ENCODE measurements at regions of chr6 and their contacts with region 1.

Region 1: GRCh38 chr6:29834564-29835436 is 7.2 kb downstream of the HLA-G start:
- DNase-seq: peak; percentile 84
- H3K4me3 Mint-ChIP-seq: no peak overlapping the region
- H3K27ac Mint-ChIP-seq: no peak overlapping the region
- H3K4me1 Mint-ChIP-seq: peaks cover 13% of the 10 kb centered on the region
- H3K27me3 Mint-ChIP-seq: peaks cover 66% of the 10 kb centered on the region

Region 2: DNA sequence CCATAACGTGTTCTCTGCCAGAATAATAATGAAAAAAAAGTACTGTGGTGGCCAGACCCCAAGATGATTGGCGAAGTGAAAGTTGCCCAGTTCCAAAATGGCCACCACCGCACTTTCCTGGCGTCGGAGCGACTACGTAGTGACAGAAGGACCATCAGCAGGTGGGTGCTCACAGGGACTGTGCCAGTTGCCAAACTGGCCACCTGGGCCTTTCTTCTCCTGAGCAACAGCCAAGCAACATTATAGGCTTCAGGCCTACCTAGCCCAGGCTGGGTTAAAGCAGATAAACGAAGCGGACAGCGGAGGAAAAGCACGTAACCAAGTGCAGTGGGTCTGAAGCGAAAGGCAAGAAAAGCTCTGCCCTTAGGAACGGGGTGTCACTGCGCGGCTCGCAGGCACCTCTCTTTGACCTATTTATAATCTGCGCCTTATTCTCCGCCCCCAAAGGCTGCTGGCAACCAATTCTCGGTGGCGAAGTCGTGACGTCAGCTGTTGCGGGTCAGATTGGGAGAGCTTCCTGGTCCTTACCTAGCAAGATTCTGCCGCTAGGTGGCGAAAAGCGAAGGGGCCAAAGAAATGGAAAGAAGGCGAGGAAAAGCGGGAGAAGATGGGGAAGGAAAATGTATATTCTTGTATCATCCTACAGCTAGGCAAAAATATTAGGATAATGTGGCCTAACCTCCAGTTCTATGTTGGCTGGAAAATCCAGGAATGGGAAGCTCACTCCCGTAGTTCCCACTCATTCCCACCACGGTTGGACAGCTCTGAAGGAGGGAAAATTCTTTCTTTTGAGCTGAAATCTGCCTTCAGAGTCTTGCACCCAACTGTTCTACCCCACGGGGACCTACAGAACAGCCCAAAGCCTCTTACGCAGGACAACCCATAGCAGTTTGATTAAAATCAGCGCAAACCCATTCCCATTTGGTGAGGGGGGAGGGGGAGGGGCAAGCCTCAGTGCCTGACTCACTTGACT is 184.8 kb before region 1 on chr6:
- intact Hi-C with region 1: loop called (anchors 5 kb)
- DNase-seq: peak; percentile 99
- H3K4me3 Mint-ChIP-seq: peak overlapping the region; percentile 94
- H3K27ac Mint-ChIP-seq: peak overlapping the region; percentile 99
- H3K4me1 Mint-ChIP-seq: peaks cover 10% of the 10 kb centered on the region
- H3K27me3 Mint-ChIP-seq: peaks cover 5% of the 10 kb centered on the region

Region 3: GRCh38 chr6:29685718-29686326 is 149.0 kb before region 1 on chr6:
- intact Hi-C with region 1: no loop called
- DNase-seq: no peak
- H3K4me3 Mint-ChIP-seq: no peak overlapping the region
- H3K27ac Mint-ChIP-seq: no peak overlapping the region
- H3K4me1 Mint-ChIP-seq: peaks cover 6% of the 10 kb centered on the region
- H3K27me3 Mint-ChIP-seq: peaks cover 20% of the 10 kb centered on the region

Region 4: GRCh38 chr6:29705389-29706231 is 129.2 kb before region 1 on chr6:
- intact Hi-C with region 1: loop called (anchors 2 kb)
- DNase-seq: peak; percentile 67
- H3K4me3 Mint-ChIP-seq: no peak overlapping the region
- H3K27ac Mint-ChIP-seq: no peak overlapping the region
- H3K4me1 Mint-ChIP-seq: peaks cover 40% of the 10 kb centered on the region
- H3K27me3 Mint-ChIP-seq: peaks cover 26% of the 10 kb centered on the region

Region 5: GRCh38 chr6:29737707-29738630 is 96.8 kb before region 1 on chr6:
- intact Hi-C with region 1: loop called (anchors 1 kb)
- DNase-seq: peak; percentile 92
- H3K4me3 Mint-ChIP-seq: no peak overlapping the region
- H3K27ac Mint-ChIP-seq: no peak overlapping the region
- H3K4me1 Mint-ChIP-seq: peaks cover 18% of the 10 kb centered on the region
- H3K27me3 Mint-ChIP-seq: no peaks in the 10 kb centered on the region